Left cardiac atrium (tissue), 4 donors: ENCODE measurements at regions of chr15 and their contacts with region 1.

Region 1: DNA sequence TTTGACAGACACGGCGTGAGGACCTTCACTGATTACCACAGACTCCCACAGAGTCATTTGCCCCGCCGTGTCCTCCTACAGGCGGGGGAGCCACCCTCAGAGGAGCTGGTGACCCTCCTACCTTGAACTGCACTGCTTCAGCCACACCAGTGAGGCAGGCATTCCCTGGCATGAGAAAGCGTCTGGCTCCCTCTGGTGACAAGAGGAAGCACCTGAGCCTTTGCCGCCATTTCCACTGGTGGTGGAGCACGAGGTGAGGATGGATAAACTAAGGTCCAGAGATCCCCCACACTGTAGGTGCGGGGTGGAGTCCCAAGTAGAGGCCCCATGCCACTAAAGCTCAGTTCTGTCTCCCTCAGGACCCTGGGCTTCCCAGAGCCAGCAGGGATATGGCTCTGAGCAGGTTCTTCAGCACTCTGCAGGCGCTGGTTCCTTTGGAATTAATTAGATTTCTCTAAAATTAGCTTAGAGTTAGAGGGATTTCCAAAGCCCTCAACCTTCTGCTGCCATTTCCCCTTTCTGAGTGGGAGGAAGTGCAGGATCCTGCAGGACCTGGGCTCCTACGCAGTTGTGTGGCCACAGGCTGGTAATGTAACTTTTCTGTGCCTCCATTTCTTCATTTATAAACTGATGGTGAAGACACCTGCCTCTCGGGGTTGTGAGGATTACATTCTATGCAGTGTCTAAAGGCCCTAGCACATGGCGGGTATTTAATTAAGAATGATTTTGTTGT is 224.0 kb downstream of the SLCO3A1 start:
- DNase-seq: peak; percentile 80
- ATAC-seq: peak; percentile 71 to 72

Region 2: GRCh38 chr15:91706322-91707032 is 371.0 kb before region 1 on chr15:
- intact Hi-C with region 1: loop called (anchors 5 to 10 kb)
- DNase-seq: peak; percentile 85
- ATAC-seq: peak; percentile 82 to 88

Region 3: DNA sequence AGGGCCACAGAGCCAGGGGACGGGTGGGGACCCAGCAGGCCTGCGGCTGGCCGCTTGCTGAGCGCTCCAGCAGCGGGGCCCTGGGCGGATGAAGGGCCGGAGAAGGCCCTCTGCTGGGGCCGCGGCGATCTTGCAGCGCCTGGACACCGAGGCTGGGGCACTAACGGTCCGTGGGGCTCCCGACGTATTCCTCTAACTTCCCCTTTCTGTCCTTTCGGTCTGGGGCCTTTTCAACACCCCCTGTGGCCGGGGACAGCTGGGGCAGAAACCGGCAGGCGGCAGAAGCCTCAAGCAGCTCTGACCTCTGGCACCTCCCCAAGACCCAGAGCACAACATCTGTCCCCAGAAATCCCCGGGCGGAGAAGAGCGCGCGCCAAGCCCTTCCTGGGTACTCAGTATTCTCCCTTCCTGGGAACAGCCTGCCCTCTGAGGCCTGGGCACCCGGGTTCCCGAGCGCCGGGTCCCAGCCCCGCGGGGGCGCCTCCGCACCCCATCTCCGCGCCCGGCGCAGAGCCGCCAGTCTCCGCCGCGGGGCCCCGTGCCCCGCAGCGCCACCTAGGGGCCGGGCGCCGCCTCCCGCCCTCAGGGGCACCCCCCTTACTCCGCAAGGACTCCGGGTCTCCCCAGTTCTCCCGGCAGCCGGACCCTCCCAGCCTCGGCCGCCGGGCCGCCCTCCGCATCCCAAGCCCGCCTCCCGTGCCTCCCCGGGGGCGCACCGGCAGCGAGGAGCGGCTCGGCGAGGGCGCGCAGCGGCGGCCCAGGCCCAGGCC is 224.6 kb before region 1 on chr15:
- intact Hi-C with region 1: loop called (anchors 2 to 5 kb)
- DNase-seq: peak; percentile 84
- ATAC-seq: peak; percentile 81 to 87

Region 4: DNA sequence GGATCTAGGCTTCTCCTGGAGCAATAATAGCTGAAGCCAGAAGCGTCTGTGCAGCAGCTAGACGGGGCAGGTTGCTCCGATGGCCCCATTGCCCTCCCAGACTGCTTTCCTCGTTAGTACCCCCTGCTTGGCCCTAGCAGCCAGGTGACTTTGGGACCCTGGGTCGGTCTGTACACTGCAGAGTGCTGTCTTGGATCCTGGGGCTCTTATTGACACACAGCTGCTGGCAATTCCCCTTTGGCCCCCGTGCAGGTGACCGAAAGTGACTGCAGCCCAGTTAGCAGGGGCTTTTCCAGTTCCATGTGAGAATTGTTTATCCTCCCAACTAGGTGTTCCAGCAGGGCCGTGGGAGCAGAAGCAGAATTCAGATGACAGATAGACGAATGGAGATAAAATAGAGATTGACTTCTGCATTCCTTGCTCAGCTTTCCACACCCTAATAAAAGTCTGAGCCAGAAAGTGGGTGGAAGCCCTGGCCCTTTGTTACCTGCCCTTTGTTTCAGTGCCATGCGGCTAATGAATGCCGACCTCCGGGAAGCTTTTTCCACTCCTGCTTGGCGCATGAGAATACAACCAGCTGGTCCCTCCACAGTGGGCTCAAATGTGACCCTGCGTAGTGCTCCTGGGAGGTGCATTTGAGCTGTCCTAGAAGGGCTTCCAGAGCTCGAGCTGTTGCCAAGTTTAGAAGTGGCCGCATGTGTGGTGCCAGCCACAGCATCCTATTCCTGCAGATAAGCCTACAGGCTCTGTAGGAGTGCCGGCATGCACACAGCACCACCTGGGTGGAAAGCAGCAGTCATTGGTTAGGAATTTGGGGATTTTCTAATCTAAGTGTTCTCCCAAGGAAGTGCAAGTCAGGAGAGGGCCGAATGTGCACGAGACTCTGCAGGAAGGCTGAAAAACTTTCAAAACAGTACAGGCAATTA is 129.6 kb before region 1 on chr15:
- intact Hi-C with region 1: loop called in 1 of 2 experiments (anchors 5 kb)
- DNase-seq: peak; percentile 54
- ATAC-seq: peak; percentile 68 to 81

Region 5: DNA sequence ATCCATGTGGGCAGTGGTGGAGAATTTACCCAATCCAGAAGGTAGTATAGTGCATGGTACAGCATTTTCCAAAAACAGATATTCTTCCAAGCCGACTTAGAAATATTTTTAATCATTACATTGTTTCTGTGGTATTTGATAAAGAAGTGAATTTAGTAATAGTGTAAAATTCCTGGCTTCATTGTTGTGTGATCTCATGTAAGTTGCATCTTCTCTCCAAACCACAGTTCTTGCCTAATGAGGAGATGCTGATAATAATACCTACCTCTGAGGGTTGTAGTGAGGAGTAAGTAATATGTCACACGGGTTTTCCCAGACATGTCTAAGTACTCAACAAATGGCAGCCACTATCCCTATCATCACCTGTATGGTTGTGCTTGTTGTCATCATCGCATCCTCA is 56.8 kb before region 1 on chr15:
- intact Hi-C with region 1: loop called in 1 of 2 experiments (anchors 10 kb)
- DNase-seq: no peak
- ATAC-seq: peak in 1 of 2 donors; percentile 63